ENCODE measurements at regions of chr16 and their contacts with region 1.

Region 1: DNA sequence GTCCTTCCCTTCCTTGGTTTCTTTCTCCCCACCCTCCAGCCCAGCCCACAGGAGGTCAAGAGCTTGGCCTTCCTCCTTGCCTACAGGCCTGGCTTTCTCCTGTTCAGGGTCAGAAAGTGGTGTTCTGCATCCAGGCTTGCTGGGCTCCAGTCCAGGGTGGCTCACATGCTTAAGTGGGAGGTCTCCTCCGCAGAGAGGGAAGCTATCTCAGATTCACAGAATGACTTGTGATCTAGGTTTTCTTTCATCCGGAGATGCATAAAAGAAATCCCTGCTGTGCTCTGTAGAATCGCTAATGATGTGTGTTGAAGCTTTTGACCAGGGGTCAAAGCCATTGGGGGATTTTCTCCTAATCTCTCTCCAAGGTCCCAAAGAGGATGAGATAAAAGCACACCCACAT is 382.3 kb upstream of the EEF2KMT start:
- DNase-seq: no peak
- ATAC-seq: no peak
- H3K4me3 ChIP-seq: no peak overlapping the region
- H3K27ac ChIP-seq: no peak overlapping the region
- H3K4me1 ChIP-seq: no peaks in the 10 kb centered on the region
- H3K27me3 ChIP-seq: peaks cover 0 to 37% (median 0%) of the 10 kb centered on the region in 7 donors
- CTCF ChIP-seq: no peak

Region 2: GRCh38 chr16:5928476-5929065 is 448.6 kb after region 1 on chr16:
- intact Hi-C with region 1: loop called in 1 of 10 experiments (anchors 10 kb)
- DNase-seq: no peak
- ATAC-seq: no peak
- H3K4me3 ChIP-seq: no peak overlapping the region
- H3K27ac ChIP-seq: no peak overlapping the region
- H3K4me1 ChIP-seq: no peaks in the 10 kb centered on the region
- H3K27me3 ChIP-seq: peaks cover 0 to 10% (median 0%) of the 10 kb centered on the region in 7 donors
- CTCF ChIP-seq: no peak